ENCODE measurements at regions of chr7 and their contacts with region 1.

Region 1: DNA sequence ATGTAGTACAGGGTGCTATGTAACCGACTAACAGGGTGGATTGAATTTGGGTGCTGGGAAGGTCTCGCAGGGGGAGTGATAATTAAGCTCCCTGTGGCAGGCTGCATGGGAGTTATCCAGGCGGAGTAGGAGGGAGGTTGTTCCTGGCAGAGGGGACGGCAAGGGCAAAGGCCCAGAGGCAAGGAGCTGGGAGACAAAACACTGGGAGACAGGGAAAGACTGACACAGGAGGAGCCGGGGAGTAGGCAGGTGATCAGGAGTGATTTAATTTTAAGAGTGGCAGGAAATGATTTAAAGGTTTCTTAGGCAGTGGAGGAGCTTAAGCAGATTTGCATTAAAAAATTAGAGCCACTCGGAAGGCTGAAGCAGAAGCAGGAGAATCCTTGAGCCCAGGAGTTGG is 40.7 kb upstream of the LEP start:
- DNase-seq: no peak
- H3K4me3 Mint-ChIP-seq: no peak overlapping the region
- H3K27ac Mint-ChIP-seq: no peak overlapping the region
- H3K4me1 Mint-ChIP-seq: peaks cover 8% of the 10 kb centered on the region
- H3K27me3 Mint-ChIP-seq: peaks cover 45% of the 10 kb centered on the region

Region 2: GRCh38 chr7:129604713-129605437 is 1404.5 kb after region 1 on chr7:
- CTCF ChIA-PET with region 1: no interaction called
- POLR2A ChIA-PET with region 1: interaction called, 10 read pairs
- DNase-seq: no peak
- H3K4me3 Mint-ChIP-seq: no peak overlapping the region
- H3K27ac Mint-ChIP-seq: no peak overlapping the region
- H3K4me1 Mint-ChIP-seq: peaks cover 25% of the 10 kb centered on the region
- H3K27me3 Mint-ChIP-seq: peaks cover 4% of the 10 kb centered on the region